ENCODE measurements at regions of chr1 and their contacts with region 1.

Region 1: DNA sequence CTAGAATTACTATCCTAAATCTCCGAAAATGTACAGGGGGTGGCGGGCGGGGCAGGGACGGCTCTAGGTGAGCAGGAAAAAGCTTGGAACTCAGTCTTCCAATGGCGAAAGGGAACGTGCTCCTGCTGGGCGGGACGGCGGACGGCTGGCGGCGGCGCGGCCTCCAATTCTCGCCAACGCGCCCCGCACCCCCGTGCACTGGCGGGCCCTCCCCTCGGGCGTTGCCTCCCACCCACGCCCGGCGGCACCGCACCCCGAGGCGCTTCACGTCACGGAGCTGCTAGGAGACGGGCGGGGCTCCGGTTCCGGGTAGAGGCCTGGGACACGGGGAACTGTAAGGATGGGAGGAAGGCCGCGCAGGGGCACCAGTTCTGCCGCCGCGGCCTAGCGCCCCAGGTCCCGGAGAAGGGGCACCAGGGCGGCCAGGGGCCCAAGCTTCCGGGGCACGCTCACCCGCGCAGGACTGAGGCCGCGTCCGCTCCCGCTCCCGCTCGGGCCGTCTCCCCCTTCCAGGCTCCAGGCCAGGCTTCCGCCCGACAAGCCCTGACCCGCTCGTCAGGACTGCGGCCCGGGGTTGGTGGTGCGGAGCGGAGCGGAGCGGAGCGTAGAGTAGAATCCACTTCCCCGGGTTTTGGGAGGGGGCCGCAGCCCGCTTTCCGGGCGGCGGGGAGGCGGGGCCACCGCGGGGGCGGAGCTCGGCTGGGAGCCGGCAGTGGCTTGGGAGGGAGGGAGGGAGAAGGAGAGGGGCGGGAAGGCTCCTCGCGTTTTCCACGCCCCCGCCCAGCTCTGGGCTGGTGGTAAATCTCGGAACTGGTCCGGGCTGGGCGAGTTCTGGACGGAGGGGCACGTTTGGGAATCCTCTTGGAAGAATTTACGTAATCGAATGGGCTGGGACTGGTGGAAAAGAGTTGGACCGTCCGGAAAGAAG is at the start of gene DDX59:
- DNase-seq: peak; percentile 91
- H3K4me3 Mint-ChIP-seq: peak within 1 kb of the TSS; percentile 99
- H3K27ac Mint-ChIP-seq: peak within 1 kb of the TSS; percentile 93
- H3K4me1 Mint-ChIP-seq: peaks cover 35% of the 10 kb centered on the region
- H3K27me3 Mint-ChIP-seq: no peaks in the 10 kb centered on the region
- total RNA-seq, gene DDX59: 32.1 to 34.0 TPM

Region 2: GRCh38 chr1:200628223-200628881 is 41.2 kb before region 1 on chr1:
- CTCF ChIA-PET with region 1: interaction called, 62 read pairs
- POLR2A ChIA-PET with region 1: interaction called, 52 read pairs
- DNase-seq: peak; percentile 61
- H3K4me3 Mint-ChIP-seq: peak overlapping the region; percentile 39
- H3K27ac Mint-ChIP-seq: peak overlapping the region; percentile 66
- H3K4me1 Mint-ChIP-seq: peaks cover 42% of the 10 kb centered on the region
- H3K27me3 Mint-ChIP-seq: peaks cover 7% of the 10 kb centered on the region

Region 3: GRCh38 chr1:200659269-200659668 is 10.3 kb before region 1 on chr1:
- CTCF ChIA-PET with region 1: interaction called, 4 read pairs
- POLR2A ChIA-PET with region 1: interaction called, 23 read pairs
- DNase-seq: no peak
- H3K4me3 Mint-ChIP-seq: no peak overlapping the region
- H3K27ac Mint-ChIP-seq: no peak overlapping the region
- H3K4me1 Mint-ChIP-seq: peaks cover 33% of the 10 kb centered on the region
- H3K27me3 Mint-ChIP-seq: no peaks in the 10 kb centered on the region

Region 4: DNA sequence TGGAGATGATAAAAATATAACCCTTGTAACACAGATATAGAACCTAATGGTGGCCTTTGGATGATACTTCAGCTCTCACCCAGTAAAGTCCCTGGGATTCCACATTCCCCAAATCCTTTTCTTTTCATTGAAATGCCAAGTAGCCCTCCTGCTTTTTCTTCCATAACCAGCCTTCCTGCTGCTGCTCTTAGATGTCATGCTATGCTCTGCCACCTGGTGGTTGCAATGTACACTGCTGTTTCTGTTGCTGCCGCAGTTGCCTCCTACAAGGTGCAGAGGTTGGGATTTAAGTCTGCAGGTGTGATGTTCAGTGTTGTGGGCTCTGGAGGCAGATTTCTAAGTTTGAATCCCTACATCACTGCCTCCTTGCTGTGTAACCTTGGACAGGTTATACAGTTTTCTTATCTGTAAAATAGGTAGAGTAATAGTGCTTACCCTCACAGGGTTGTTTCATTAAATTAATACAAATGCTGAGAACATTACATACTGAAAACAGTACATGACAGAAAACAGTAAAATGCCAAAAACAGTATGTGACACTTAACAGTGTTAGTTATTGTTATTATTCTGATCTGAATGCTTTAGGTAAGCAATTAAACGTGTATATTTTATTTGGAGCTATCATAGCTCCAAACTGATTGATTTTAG is 133.4 kb after region 1 on chr1:
- CTCF ChIA-PET with region 1: interaction called, 12 read pairs
- POLR2A ChIA-PET with region 1: interaction called, 5 read pairs
- DNase-seq: peak; percentile 75
- H3K4me3 Mint-ChIP-seq: no peak overlapping the region
- H3K27ac Mint-ChIP-seq: no peak overlapping the region
- H3K4me1 Mint-ChIP-seq: no peaks in the 10 kb centered on the region
- H3K27me3 Mint-ChIP-seq: peaks cover 21% of the 10 kb centered on the region

Measured in activated CD4-positive, alpha-beta memory T cell treated with anti-CD3 and anti-CD28 coated beads, Interleukin-2, amount 10 ng/mL, durations not matched to agents 7 days and 5 days (primary cell).